ENCODE measurements at regions of chr12 and their contacts with region 1.

Region 1: GRCh38 chr12:103840876-103841689 is at the start of gene NT5DC3:
- DNase-seq: peak; percentile 77 to 93 (median 87)
- ATAC-seq: peak; percentile 98
- H3K4me3 ChIP-seq: peak within 1 kb of the TSS; percentile 68
- H3K4me3 Mint-ChIP-seq: peak within 1 kb of the TSS; percentile 80 to 92 (median 86)
- H3K27ac ChIP-seq: peak within 1 kb of the TSS; percentile 55
- H3K27ac Mint-ChIP-seq: peak within 1 kb of the TSS in 8 of 9 donors; percentile 61 to 89 (median 76)
- H3K4me1 ChIP-seq: peaks cover 7 to 9% of the 10 kb centered on the region in 2 donors
- H3K4me1 Mint-ChIP-seq: peaks cover 5 to 26% (median 18%) of the 10 kb centered on the region in 7 donors
- H3K27me3 ChIP-seq: no peaks in the 10 kb centered on the region
- H3K27me3 Mint-ChIP-seq: peaks cover 0 to 35% (median 0%) of the 10 kb centered on the region in 5 donors
- total RNA-seq, gene NT5DC3: 3.9 to 5.0 (median 4.5) TPM

Region 2: DNA sequence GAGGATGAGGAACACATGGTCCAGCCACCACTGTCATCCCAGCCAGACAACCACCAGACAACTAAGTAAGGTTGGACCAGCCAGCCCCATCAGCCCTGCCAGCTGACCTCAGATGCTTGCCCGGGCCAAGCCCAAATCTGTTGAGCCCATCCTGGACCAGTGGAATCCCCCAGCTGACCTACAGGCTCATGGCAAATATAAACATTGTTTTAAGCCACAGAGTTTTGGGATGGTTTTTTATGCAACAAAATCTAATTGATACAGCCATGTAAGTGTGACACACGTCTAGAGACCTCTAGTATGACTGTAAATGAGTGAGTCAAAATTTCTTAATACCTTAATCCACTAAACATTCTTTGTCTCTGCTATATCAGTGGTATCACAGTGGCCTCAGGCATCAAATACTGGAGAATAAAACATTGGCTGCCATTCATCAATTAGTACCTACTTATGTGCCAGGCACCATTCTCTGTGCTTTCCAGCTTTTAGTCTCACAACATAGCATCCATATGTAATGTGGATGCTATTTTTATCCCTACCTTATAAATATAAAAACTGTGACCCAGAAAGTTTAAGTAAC is 24.2 kb after region 1 on chr12:
- CTCF ChIA-PET with region 1: no interaction called
- POLR2A ChIA-PET with region 1: no interaction called
- intact Hi-C with region 1: loop called in 1 of 2 experiments (anchors 1 kb)
- DNase-seq: no peak
- ATAC-seq: no peak
- H3K4me3 ChIP-seq: no peak overlapping the region
- H3K4me3 Mint-ChIP-seq: no peak overlapping the region
- H3K27ac ChIP-seq: no peak overlapping the region
- H3K27ac Mint-ChIP-seq: no peak overlapping the region
- H3K4me1 ChIP-seq: no peaks in the 10 kb centered on the region
- H3K4me1 Mint-ChIP-seq: no peaks in the 10 kb centered on the region
- H3K27me3 ChIP-seq: no peaks in the 10 kb centered on the region
- H3K27me3 Mint-ChIP-seq: peaks cover 0 to 15% (median 4%) of the 10 kb centered on the region in 5 donors

Region 3: DNA sequence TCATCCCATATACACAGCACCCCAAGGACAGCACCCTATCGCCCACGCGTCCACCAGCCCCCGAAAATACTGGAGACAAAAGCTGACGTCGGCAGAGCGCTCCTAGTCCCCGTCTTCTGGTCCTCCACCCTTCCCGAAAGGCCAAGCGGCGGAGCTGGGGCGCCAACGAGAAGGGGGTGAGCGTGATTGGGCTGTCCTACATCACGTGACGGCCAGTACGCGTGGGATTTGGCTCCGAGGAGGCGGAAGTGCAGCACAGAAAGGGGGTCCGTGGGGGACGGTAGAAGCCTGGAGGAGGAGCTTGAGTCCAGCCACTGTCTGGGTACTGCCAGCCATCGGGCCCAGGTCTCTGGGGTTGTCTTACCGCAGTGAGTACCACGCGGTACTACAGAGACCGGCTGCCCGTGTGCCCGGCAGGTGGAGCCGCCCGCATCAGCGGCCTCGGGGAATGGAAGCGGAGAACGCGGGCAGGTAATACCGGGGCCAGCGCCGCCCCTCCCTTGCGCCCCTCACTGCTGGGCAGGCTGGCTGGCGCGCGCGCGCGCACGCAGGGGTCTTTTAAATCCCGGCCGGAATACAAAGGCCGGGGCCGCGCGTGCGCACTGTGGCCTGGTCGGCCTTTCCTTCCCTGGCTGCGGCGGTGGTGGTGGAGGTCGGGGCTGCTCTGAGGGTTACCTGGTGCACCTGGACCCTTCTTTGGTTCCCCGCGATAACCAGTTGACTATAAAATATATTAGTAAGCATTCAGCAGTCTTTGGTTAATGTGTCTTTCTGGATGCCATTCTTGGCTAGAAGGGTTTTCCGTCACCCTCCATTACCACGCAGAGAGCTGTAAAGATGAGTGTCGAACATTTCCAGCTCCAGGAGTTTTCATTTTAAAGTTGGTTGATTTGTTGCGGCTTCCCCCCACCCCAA is 124.8 kb after region 1 on chr12 and contains the start of gene TDG:
- CTCF ChIA-PET with region 1: no interaction called
- POLR2A ChIA-PET with region 1: interaction called, 4 read pairs
- intact Hi-C with region 1: loop called (anchors 1 to 2 kb)
- DNase-seq: peak; percentile 81 to 97 (median 95)
- ATAC-seq: peak; percentile 97
- H3K4me3 ChIP-seq: peak within 1 kb of the TSS; percentile 87
- H3K4me3 Mint-ChIP-seq: peak within 1 kb of the TSS; percentile 92 to 99 (median 97)
- H3K27ac ChIP-seq: peak within 1 kb of the TSS; percentile 94
- H3K27ac Mint-ChIP-seq: peak within 1 kb of the TSS; percentile 96 to 100 (median 99)
- H3K4me1 ChIP-seq: peaks cover 31 to 41% of the 10 kb centered on the region in 2 donors
- H3K4me1 Mint-ChIP-seq: peaks cover 34 to 68% (median 57%) of the 10 kb centered on the region in 7 donors
- H3K27me3 ChIP-seq: no peaks in the 10 kb centered on the region
- H3K27me3 Mint-ChIP-seq: no peaks in the 10 kb centered on the region
- total RNA-seq, gene TDG: 21.5 to 43.0 (median 35.5) TPM

Region 4: DNA sequence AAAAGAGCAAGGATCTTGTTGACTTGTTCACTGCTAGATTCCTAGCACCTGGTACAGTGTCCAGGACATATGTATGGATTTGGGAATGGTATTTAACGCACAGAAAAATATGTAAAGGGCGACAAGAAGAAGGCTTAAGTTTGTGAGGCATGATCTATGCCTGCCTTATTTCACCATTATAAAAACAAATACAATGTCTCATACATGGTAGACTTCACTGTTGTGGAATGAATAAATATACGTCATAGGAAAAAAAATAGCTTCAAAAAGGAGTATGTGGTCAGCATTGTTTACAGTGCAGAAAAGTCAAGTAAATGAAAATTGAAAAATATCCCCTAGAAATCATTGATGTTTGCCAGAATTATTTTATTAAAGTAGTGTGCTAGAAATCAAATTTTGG is 253.2 kb after region 1 on chr12:
- CTCF ChIA-PET with region 1: no interaction called
- POLR2A ChIA-PET with region 1: no interaction called
- intact Hi-C with region 1: no loop called
- DNase-seq: no peak
- ATAC-seq: no peak
- H3K4me3 ChIP-seq: no peak overlapping the region
- H3K4me3 Mint-ChIP-seq: no peak overlapping the region
- H3K27ac ChIP-seq: no peak overlapping the region
- H3K27ac Mint-ChIP-seq: peak overlapping the region in 1 of 9 donors; percentile 22
- H3K4me1 ChIP-seq: no peaks in the 10 kb centered on the region
- H3K4me1 Mint-ChIP-seq: peaks cover 0 to 1% (median 0%) of the 10 kb centered on the region in 7 donors
- H3K27me3 ChIP-seq: no peaks in the 10 kb centered on the region
- H3K27me3 Mint-ChIP-seq: no peaks in the 10 kb centered on the region

Region 5: GRCh38 chr12:104137913-104138796 is 297.1 kb after region 1 on chr12 and contains the start of gene NFYB:
- CTCF ChIA-PET with region 1: no interaction called
- POLR2A ChIA-PET with region 1: no interaction called
- intact Hi-C with region 1: loop called (anchors 1 to 2 kb)
- DNase-seq: peak; percentile 90 to 96 (median 94)
- ATAC-seq: peak; percentile 97
- H3K4me3 ChIP-seq: peak within 1 kb of the TSS; percentile 69
- H3K4me3 Mint-ChIP-seq: peak within 1 kb of the TSS; percentile 81 to 93 (median 90)
- H3K27ac ChIP-seq: peak within 1 kb of the TSS; percentile 72
- H3K27ac Mint-ChIP-seq: peak within 1 kb of the TSS; percentile 71 to 95 (median 89)
- H3K4me1 ChIP-seq: peaks cover 10 to 23% of the 10 kb centered on the region in 2 donors
- H3K4me1 Mint-ChIP-seq: peaks cover 0 to 22% (median 9%) of the 10 kb centered on the region in 7 donors
- H3K27me3 ChIP-seq: no peaks in the 10 kb centered on the region
- H3K27me3 Mint-ChIP-seq: peaks cover 0 to 24% (median 0%) of the 10 kb centered on the region in 5 donors
- total RNA-seq, gene NFYB: 11.6 to 25.9 (median 24.4) TPM

Region 6: DNA sequence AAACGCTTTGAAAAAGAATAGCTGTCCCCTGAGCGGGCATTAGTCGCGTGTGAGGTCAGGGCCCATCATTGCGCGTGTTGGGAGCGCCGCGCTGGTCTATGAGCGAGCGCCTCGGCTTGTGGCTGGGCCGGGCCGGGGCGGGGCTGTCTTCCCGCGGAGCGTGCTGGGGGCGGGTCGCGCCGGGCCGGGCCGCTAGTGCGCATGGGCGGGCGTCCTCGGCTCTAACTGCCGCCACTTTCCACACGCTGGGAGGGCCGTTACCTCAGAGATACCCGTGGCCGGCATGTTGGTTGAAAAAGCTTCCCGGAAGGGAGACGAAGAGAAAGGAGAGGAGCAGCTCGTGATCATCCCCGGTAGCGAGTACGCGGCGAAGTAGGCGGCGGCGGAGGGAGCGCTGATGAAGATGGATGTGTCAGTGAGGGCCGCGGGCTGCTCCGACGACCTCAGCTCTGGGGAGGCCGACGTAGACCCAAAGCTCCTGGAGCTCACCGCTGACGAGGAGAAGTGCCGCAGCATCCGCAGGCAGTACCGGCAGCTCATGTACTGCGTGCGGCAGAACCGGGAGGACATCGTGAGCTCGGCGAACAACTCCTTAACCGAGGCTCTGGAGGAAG is 462.6 kb after region 1 on chr12 and contains the start of gene EID3:
- CTCF ChIA-PET with region 1: no interaction called
- POLR2A ChIA-PET with region 1: no interaction called
- intact Hi-C with region 1: loop called in 1 of 2 experiments (anchors 5 kb)
- DNase-seq: peak; percentile 86 to 96 (median 91)
- ATAC-seq: peak; percentile 99
- H3K4me3 ChIP-seq: peak within 1 kb of the TSS; percentile 56
- H3K4me3 Mint-ChIP-seq: peak within 1 kb of the TSS; percentile 87 to 99 (median 96)
- H3K27ac ChIP-seq: peak within 1 kb of the TSS; percentile 84
- H3K27ac Mint-ChIP-seq: peak within 1 kb of the TSS; percentile 91 to 99 (median 97)
- H3K4me1 ChIP-seq: peaks cover 7 to 24% of the 10 kb centered on the region in 2 donors
- H3K4me1 Mint-ChIP-seq: peaks cover 35 to 72% (median 56%) of the 10 kb centered on the region in 7 donors
- H3K27me3 ChIP-seq: no peaks in the 10 kb centered on the region
- H3K27me3 Mint-ChIP-seq: no peaks in the 10 kb centered on the region
- total RNA-seq, gene EID3: 8.2 to 11.8 (median 10.4) TPM

Region 7: DNA sequence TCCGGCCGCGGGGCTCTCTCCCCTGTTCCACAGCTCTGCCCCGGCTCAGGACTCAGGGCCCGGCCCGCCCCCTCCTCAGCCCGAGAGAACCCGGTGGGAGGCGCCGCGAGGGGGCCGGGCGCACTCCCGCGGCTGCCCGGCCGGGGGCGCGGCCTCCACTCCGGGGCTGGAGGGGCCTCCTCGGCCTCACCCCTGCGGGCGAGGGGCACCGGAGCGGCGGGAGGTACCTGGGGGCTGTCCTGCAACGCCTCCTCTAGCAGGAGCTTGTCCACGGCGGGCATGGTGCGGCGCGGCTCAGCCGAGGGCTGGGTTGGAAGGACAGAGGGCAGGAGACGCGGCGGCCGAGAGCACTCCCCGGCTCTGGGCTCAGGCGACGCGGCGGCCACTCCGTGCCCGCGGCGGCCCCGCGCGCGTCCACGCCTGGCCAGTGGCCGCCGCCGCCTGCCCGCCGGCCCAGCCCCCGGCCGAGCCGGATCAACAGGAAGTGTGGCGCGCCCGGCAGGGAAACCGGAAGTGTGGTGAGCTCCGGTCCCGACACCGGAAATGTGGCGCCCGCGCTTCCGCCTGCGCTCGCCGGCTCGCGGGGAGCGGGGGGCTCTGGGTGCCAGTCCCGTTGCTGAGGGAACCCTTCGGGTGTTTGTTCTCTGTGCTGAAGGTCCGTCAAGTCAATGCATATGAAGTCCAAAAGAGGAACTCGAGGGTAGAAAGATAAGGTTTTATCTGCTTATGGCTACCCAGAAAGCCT is 1394.8 kb after region 1 on chr12 and contains the start of gene APPL2:
- CTCF ChIA-PET with region 1: no interaction called
- POLR2A ChIA-PET with region 1: no interaction called
- intact Hi-C with region 1: loop called in 1 of 2 experiments (anchors 2 kb)
- DNase-seq: peak; percentile 52 to 81 (median 71)
- ATAC-seq: peak; percentile 86
- H3K4me3 ChIP-seq: peak within 1 kb of the TSS; percentile 71
- H3K4me3 Mint-ChIP-seq: peak within 1 kb of the TSS in 9 of 10 donors; percentile 89 to 95 (median 93)
- H3K27ac ChIP-seq: peak within 1 kb of the TSS; percentile 78
- H3K27ac Mint-ChIP-seq: peak within 1 kb of the TSS; percentile 86 to 96 (median 91)
- H3K4me1 ChIP-seq: peaks cover 25 to 39% of the 10 kb centered on the region in 2 donors
- H3K4me1 Mint-ChIP-seq: peaks cover 42 to 54% (median 48%) of the 10 kb centered on the region in 7 donors
- H3K27me3 ChIP-seq: no peaks in the 10 kb centered on the region
- H3K27me3 Mint-ChIP-seq: peaks cover 0 to 3% (median 0%) of the 10 kb centered on the region in 5 donors
- total RNA-seq, gene APPL2: 31.6 to 74.5 (median 58.3) TPM

Measured in naive thymus-derived CD4-positive, alpha-beta T cell (primary cell).